Head of caudate nucleus (tissue), 42 donors: ENCODE measurements at regions of chr19 and their contacts with region 1.

Region 1: DNA sequence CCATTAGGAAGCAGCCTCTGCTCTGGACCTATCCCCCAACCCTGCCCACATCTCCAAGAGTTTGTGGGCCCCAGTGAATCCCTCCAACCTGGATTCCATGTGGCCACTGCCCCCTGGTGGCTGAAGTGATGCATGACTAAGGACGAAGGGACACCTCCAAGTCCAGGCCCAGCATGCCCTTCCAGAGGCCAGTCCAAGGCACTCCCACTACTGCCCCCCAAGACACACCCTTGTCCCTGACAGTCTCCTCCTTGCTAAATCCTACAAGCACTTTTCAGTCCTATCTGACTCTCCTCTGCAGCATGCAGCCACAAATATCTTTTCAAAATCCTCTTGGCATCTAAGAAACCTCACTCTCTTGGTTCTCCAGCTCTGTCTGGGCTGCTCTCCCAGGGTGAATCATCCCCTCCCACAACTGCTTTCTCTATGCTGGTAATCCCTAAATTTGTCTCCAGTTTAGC is 33.0 kb downstream of the DEDD2 start:
- DNase-seq: peak; percentile 40 to 93 (median 82)

Region 2: GRCh38 chr19:42132851-42133528 is 51.4 kb before region 1 on chr19:
- intact Hi-C with region 1: loop called (anchors 5 kb)
- DNase-seq: peak; percentile 24 to 90 (median 80)